PC-9 (cell line): ENCODE measurements at regions of chr16 and their contacts with region 1.

Region 1: GRCh38 chr16:10579965-10580882 is at the start of gene EMP2:
- DNase-seq: peak; percentile 56 to 89
- H3K4me3 ChIP-seq: peak within 1 kb of the TSS; percentile 92
- H3K27ac ChIP-seq: 0 out of 2 replicates have a peak within 1 kb of the TSS, but pooled peaks have one; percentile 31
- H3K4me1 ChIP-seq: peaks cover 53% of the 10 kb centered on the region
- H3K27me3 ChIP-seq: no peaks in the 10 kb centered on the region
- CTCF ChIP-seq: peak; percentile 67; the same call in 1 of the 2 replicates
- total RNA-seq, gene EMP2: 82.5 and 137 TPM in 2 replicates

Region 2: DNA sequence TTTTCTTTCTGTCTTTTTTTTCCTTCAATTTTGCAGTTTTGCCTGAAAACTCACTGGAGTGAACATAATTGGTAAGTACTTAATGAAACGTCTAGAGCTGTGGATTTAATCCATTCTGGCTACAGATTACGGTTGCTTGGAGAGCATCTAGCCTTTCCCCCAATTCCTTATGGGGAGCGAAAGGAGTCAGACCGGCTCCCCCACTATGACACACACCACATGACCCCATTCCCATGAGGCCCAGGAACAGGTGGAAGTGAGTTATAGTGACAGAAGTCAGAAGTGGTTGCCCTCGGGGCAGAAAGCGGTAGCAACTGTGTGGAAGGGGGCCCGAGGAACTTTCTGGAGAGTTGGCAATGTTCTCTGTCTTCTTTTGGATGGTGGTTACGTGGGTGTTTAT is 41.0 kb before region 1 on chr16:
- CTCF ChIA-PET with region 1: interaction called, 3 read pairs
- POLR2A ChIA-PET with region 1: no interaction called
- intact Hi-C with region 1: loop called (anchors 2 kb)
- DNase-seq: peak; percentile 80 to 96
- H3K4me3 ChIP-seq: no peak overlapping the region; the same call in 1 of the 2 replicates
- H3K27ac ChIP-seq: peak overlapping the region; percentile 92
- H3K4me1 ChIP-seq: peaks cover 65% of the 10 kb centered on the region
- H3K27me3 ChIP-seq: no peaks in the 10 kb centered on the region
- CTCF ChIP-seq: no peak

Region 3: GRCh38 chr16:10616730-10617555 is 36.7 kb after region 1 on chr16:
- CTCF ChIA-PET with region 1: interaction called, 5 read pairs
- POLR2A ChIA-PET with region 1: no interaction called
- intact Hi-C with region 1: loop called (anchors 1 kb)
- DNase-seq: peak; percentile 63 to 94
- H3K4me3 ChIP-seq: no peak overlapping the region
- H3K27ac ChIP-seq: no peak overlapping the region
- H3K4me1 ChIP-seq: peaks cover 26% of the 10 kb centered on the region
- H3K27me3 ChIP-seq: no peaks in the 10 kb centered on the region
- CTCF ChIP-seq: no peak; the same call in 1 of the 2 replicates

Region 4: GRCh38 chr16:10729104-10730048 is 149.2 kb after region 1 on chr16:
- CTCF ChIA-PET with region 1: no interaction called
- POLR2A ChIA-PET with region 1: no interaction called
- intact Hi-C with region 1: loop called (anchors 2 kb)
- DNase-seq: peak; percentile 84 to 87
- H3K4me3 ChIP-seq: no peak overlapping the region
- H3K27ac ChIP-seq: no peak overlapping the region
- H3K4me1 ChIP-seq: peaks cover 18% of the 10 kb centered on the region
- H3K27me3 ChIP-seq: no peaks in the 10 kb centered on the region
- CTCF ChIP-seq: no peak; the same call in 1 of the 2 replicates

Region 5: DNA sequence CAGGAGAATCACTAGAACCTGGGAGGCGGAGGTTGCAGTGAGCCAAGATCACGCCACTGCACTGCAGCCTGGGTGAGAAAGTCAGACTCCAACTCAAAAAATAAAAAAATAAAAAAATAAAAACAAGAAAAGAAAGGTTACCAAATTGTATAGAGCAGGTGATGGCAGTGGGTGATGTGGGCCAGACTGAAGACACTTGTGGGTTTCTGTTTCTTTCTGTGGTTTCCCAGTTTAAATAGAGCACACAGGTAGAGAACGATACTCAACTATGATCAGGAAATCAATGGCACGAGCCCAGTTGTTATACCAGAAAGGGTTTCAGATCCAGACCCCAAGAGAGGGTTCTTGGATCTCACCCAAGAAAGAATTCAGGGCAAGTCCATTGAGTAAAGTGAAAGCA is 196.1 kb after region 1 on chr16:
- CTCF ChIA-PET with region 1: no interaction called
- POLR2A ChIA-PET with region 1: no interaction called
- intact Hi-C with region 1: no loop called
- DNase-seq: no peak
- H3K4me3 ChIP-seq: no peak overlapping the region
- H3K27ac ChIP-seq: no peak overlapping the region
- H3K4me1 ChIP-seq: no peaks in the 10 kb centered on the region
- H3K27me3 ChIP-seq: no peaks in the 10 kb centered on the region
- CTCF ChIP-seq: no peak